Activated CD4-positive, alpha-beta T cell treated with anti-CD3 and anti-CD28 coated beads, Interleukin-2, amount 10 ng/mL, durations not matched to agents 24 days and 14 days (primary cell): ENCODE measurements at regions of chr18 and their contacts with region 1.

Region 1: GRCh38 chr18:46891742-46892214 is 25.5 kb downstream of the PIAS2 start:
- DNase-seq: peak; percentile 55
- H3K4me3 Mint-ChIP-seq: no peak overlapping the region
- H3K27ac Mint-ChIP-seq: peak overlapping the region; percentile 21
- H3K4me1 Mint-ChIP-seq: peaks cover 20% of the 10 kb centered on the region
- H3K27me3 Mint-ChIP-seq: no peaks in the 10 kb centered on the region

Region 2: GRCh38 chr18:46324087-46324958 is 567.5 kb before region 1 on chr18:
- intact Hi-C with region 1: no loop called
- DNase-seq: no peak
- H3K4me3 Mint-ChIP-seq: no peak overlapping the region
- H3K27ac Mint-ChIP-seq: no peak overlapping the region
- H3K4me1 Mint-ChIP-seq: peaks cover 4% of the 10 kb centered on the region
- H3K27me3 Mint-ChIP-seq: peaks cover 7% of the 10 kb centered on the region

Region 3: DNA sequence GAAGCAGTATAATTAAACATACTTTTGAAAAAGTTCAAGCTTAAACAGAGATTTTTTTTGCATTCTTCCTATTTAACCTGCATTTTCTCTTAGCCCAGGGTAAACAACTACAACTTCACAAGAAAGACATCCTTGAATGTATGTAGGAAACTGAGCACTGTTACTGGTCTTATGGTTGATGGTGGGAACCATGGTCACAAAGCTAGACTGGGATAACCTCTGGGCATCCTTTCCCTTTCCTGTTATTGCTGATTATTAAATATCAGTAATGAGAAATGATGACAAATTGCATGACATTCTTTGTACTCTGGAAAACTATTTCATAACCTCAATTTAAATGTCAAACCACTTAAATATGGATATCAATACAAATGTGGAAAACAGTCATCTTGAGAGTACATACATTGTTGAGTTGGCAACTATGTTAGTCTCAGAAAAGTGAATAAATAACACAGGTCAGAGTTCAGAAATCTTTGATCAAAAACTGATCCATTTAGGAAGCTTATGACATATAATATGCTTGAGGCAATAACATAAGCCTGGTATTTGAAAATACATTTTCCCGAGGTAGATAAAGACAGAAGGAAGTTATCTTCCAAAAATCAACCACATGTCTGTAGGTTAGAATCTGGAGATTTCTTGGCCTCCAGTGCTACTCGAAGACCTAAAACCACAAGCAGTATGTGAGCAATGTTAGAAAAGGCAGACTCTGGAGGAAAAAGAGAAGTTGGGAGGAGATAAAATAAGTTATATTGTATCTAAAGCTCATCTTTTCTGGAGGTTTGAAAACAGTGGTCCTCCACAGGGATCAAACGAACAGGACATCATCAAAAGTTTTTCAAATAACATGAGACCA is 69.7 kb before region 1 on chr18:
- intact Hi-C with region 1: loop called (anchors 5 kb)
- DNase-seq: no peak
- H3K4me3 Mint-ChIP-seq: peak overlapping the region; percentile 13
- H3K27ac Mint-ChIP-seq: peak overlapping the region; percentile 78
- H3K4me1 Mint-ChIP-seq: peaks cover 11% of the 10 kb centered on the region
- H3K27me3 Mint-ChIP-seq: no peaks in the 10 kb centered on the region